ENCODE measurements at regions of chr12 and their contacts with region 1.

Region 1: DNA sequence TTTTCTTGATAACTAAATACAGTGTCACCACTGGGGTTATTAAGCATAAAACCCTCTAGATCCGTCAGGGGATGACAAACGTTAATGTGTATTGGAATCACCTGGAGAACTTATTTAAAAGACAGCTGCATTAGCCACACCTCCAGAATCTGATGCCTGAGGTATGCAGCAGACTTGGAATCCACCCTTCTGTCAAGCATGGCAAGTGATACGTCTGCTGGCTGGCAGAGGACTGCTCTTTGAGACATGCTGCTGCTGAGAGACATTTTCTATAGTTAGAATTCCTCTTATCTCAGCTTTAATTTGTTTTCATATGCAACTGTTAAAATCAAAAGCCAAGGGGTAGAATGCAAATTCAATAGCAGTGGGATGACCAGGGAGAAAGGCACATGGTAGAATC is 496.3 kb downstream of the NELL2 start:
- DNase-seq: no peak
- ATAC-seq: no peak

Region 2: DNA sequence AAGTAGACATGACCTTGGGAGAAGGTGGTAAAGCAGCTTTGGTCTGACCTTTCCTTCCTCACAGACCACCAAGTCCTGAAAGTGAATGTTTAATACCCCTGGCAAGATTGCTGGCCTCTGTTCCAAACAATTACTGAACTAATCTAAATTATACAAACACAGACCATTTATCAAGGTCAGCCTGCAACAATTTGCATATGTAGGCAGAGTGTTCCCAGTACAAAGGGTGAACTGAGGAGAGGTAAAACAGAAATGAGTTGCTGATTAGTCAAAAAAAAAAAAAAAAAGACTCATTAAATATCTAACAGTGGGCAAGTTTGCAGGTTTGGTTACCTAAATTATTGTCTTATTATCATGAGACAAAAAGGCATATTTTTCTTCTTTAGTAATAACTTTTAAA is 37.5 kb before region 1 on chr12:
- intact Hi-C with region 1: loop called (anchors 2 kb)
- DNase-seq: no peak
- ATAC-seq: no peak